Colonic mucosa (tissue), 4 donors: ENCODE measurements at regions of chr12 and their contacts with region 1.

Region 1: DNA sequence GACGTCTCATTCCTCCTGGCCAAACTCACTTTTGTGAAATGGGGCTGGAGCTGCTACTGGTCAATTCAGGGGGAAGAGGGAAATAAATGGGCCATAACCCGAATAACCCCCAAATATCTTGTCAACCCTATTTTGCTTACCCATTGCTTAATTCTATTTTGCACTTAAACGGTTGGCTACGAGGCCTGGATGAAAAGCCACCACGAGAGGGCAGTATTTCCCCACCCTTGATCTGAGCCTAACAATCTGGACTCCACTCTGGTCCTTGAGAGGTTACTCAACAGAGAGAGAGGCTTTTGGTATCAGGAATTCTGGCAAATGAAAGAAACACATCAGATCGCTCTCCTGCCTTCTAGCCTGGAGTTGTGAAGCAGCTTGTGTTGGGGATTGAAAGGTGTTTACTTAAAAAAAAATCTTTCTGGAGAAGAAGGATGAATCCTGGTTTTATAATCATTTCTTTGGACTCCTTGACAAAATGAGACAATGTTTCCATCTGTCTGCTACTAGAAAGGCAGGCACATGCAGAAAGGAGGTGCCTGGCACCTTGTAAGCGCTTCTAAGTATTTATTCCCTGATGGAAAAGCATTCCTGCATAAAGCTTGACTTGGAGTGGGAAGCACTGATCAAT is 22.4 kb upstream of the FBXO21 start:
- DNase-seq: peak; percentile 63
- H3K4me3 ChIP-seq: no peak overlapping the region
- H3K27ac ChIP-seq: no peak overlapping the region
- H3K4me1 ChIP-seq: no peaks in the 10 kb centered on the region
- H3K27me3 ChIP-seq: no peaks in the 10 kb centered on the region
- CTCF ChIP-seq: peak; percentile 79

Region 2: GRCh38 chr12:117063162-117063911 is 149.3 kb before region 1 on chr12:
- intact Hi-C with region 1: no loop called
- DNase-seq: peak; percentile 31
- H3K4me3 ChIP-seq: no peak overlapping the region
- H3K27ac ChIP-seq: no peak overlapping the region
- H3K4me1 ChIP-seq: no peaks in the 10 kb centered on the region
- H3K27me3 ChIP-seq: no peaks in the 10 kb centered on the region
- CTCF ChIP-seq: no peak

Region 3: DNA sequence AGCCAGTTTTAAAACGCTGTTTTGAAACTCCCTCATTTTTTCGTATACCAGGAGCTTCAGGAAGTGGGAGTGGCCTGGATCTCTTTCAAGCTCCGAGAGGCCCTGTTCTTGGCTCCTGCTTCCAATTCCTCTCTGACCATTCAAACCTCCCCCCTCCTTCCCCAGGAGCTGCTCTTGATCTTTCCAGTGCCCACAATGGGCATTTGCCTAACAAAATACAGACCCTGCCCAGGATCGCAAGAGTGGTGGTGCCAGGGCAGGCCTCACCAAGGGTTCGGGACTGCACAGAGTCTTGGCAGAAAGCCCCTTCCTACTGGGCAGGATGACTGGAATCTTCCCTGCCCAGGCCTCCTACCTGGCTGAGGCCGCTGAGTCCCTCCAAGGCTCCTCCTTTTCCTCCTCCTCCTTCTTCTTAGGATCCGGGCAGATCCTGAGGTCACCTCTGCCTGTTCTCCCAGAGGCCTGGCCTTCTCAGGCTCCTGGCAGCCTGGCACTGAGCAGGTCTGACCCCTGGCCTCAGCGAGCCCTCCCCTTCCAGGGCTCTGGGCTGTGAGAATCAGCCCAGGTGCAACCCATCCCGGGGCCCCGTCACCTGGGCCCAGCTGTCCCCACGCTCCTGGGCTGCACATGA is 195.6 kb after region 1 on chr12:
- intact Hi-C with region 1: no loop called
- DNase-seq: peak; percentile 19
- H3K4me3 ChIP-seq: no peak overlapping the region
- H3K27ac ChIP-seq: no peak overlapping the region
- H3K4me1 ChIP-seq: no peaks in the 10 kb centered on the region
- H3K27me3 ChIP-seq: no peaks in the 10 kb centered on the region
- CTCF ChIP-seq: no peak

Region 4: DNA sequence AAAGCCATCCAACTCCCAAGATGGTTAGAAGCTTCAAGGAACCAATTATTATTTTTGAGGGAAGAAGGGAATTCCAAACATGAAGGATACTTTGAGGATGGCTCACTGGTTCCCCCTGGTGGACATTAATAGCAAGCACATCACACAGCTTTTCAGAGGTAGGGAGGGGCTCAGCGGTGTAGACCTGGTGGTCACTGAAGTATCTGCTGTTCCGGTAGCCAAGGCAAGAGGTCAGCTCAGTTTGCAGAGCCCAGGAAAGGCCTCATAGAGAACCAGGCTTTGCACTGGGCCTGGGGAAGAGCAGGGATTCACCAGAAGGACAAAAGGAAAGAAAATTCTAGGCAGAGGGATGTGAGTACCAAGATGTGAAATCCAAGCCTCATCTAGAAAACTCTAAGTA is 637.4 kb after region 1 on chr12:
- intact Hi-C with region 1: loop called (anchors 5 kb)
- DNase-seq: peak; percentile 22
- H3K4me3 ChIP-seq: no peak overlapping the region
- H3K27ac ChIP-seq: no peak overlapping the region
- H3K4me1 ChIP-seq: no peaks in the 10 kb centered on the region
- H3K27me3 ChIP-seq: no peaks in the 10 kb centered on the region
- CTCF ChIP-seq: peak; percentile 86